IMR-90 (cell line): ENCODE measurements at regions of chr22 and their contacts with region 1.

Region 1: DNA sequence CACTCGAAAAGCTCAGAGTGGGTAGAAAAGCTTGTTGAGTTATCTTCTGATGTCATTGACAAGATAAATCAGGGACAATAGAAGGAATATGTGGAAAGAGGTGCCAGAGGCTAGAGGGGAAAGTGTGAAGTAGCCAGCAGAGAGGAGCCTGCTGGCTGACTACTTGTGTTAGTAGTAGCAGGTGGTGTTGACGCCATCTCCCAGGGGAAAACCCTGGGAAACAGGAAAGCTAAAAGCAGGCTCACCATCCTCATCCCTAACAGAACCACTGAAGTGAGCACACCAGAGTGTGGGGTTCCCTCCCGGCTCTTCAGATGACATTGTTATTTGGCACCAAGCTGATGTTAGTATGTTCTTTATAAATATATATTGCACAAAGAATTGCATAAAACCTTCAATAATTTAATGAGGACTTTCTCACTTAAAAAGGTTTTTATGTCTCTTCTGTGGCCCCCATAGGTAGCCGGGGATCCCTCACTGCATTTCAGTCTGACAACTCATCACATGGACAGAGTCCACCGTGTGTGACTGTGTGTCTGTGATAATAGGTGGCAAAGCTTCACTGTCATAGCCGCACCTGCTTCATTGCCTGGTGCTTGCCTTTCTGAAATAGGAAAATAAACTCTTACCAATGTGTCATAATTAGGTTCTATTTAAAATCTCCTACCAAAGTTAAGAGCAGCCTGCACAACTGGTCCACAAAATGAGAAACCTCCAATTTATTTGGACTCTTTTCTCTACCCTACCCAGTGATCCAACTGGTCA is 63.2 kb upstream of the TOP3B start:
- DNase-seq: no peak
- ATAC-seq: no peak
- H3K4me3 ChIP-seq: no peak overlapping the region
- H3K27ac ChIP-seq: no peak overlapping the region
- H3K4me1 ChIP-seq: peaks cover 3% of the 10 kb centered on the region
- H3K27me3 ChIP-seq: peaks cover 21% of the 10 kb centered on the region
- CTCF ChIP-seq: no peak
- POLR2A ChIP-seq: no peak
- RAD21 ChIP-seq: no peak

Region 2: GRCh38 chr22:21797444-21798221 is 248.1 kb before region 1 on chr22:
- CTCF ChIA-PET with region 1: no interaction called
- POLR2A ChIA-PET with region 1: no interaction called
- dilution Hi-C with region 1: no loop called
- in situ Hi-C with region 1: no loop called
- intact Hi-C with region 1: no loop called
- DNase-seq: peak; percentile 31
- ATAC-seq: no peak
- H3K4me3 ChIP-seq: no peak overlapping the region
- H3K27ac ChIP-seq: no peak overlapping the region
- H3K4me1 ChIP-seq: no peaks in the 10 kb centered on the region
- H3K27me3 ChIP-seq: no peaks in the 10 kb centered on the region
- CTCF ChIP-seq: no peak
- POLR2A ChIP-seq: no peak
- RAD21 ChIP-seq: no peak

Region 3: GRCh38 chr22:22013559-22014284 is 32.0 kb before region 1 on chr22:
- CTCF ChIA-PET with region 1: no interaction called
- POLR2A ChIA-PET with region 1: no interaction called
- dilution Hi-C with region 1: no loop called
- in situ Hi-C with region 1: no loop called
- intact Hi-C with region 1: loop called (anchors 2 kb)
- DNase-seq: no peak
- ATAC-seq: no peak
- H3K4me3 ChIP-seq: no peak overlapping the region
- H3K27ac ChIP-seq: no peak overlapping the region
- H3K4me1 ChIP-seq: no peaks in the 10 kb centered on the region
- H3K27me3 ChIP-seq: peaks cover 14% of the 10 kb centered on the region
- CTCF ChIP-seq: no peak
- POLR2A ChIP-seq: no peak
- RAD21 ChIP-seq: no peak